Sciatic nerve (tissue), 2 donors: ENCODE measurements at regions of chr6 and their contacts with region 1.

Region 1: DNA sequence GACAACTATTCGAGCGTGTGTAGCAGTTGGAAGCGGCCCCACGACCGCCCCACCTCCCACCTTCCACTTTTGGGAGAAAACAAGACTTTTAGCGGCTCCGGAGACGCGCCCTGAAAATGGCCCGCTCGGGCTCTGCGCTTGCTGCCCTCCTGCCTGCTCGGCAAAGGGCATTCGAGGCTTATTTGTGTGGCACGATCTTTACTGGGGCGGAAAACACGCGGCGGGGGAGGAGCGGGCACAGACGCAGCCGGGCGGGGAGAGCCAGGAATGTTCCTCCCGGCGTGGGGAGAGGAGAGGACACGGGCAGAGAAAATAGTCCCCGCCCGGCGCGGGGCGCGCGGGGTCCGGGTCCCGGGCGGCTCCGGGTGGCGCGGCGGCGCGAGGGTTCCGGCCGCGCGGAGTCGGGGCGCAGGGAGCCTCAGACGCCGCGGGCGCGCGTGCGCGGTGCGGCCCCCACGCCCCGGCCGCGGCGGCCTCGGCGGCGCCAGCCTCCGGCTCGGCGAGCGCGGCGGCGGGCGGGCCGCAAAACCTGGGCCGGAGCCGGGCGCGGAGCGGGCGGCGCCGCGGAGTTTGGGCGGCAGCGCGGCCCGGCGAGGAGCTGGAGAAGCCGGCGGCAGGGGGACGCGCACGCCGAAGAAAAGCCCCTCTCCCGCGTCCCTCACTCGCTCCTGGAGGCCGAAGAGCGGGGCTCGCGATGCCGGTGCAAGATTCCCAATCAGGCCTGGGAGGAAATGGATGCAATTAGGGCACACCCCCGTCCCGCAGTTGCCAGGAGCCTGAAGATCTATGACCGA is 90.0 kb upstream of the ARID1B start:
- DNase-seq: peak; percentile 93
- ATAC-seq: peak; percentile 96

Region 2: GRCh38 chr6:156564127-156564806 is 122.9 kb before region 1 on chr6:
- intact Hi-C with region 1: loop called (anchors 10 kb)
- DNase-seq: peak; percentile 92
- ATAC-seq: peak; percentile 96

Region 3: DNA sequence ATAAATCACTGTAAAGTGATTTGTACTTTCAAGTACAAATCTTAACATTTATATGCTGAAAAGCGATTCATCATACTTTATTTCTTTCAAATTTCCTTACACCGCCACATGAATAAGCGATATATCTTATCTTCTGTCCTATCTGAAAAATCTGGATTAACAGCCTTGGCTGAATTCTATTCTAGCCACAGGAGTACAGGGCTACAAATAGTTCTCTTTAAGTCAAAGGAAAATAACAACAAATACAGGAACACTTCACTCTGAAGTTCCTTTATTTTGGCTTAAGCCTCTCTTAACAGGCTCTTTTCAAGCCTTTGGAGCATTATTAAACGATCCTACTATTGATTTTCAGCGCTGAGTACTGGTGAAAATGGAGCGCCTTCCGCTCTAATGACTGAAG is 27.4 kb after region 1 on chr6:
- intact Hi-C with region 1: loop called (anchors 1 kb)
- DNase-seq: no peak
- ATAC-seq: no peak

Region 4: GRCh38 chr6:156776840-156777576 is 89.8 kb after region 1 on chr6 and contains the start of gene ARID1B:
- intact Hi-C with region 1: loop called (anchors 5 kb)
- DNase-seq: peak; percentile 90
- ATAC-seq: peak; percentile 73
- total RNA-seq, gene ARID1B: 142 TPM